Sigmoid colon (tissue), 7 donors: ENCODE measurements at regions of chr10 and their contacts with region 1.

Region 1: GRCh38 chr10:75111367-75111906 is at the start of gene SAMD8:
- DNase-seq: peak; percentile 99
- H3K4me3 ChIP-seq: peak within 1 kb of the TSS; percentile 69 to 97 (median 84)
- H3K27ac ChIP-seq: peak within 1 kb of the TSS; percentile 95 to 99 (median 97)
- H3K4me1 ChIP-seq: peaks cover 0 to 34% (median 21%) of the 10 kb centered on the region in 4 donors
- H3K27me3 ChIP-seq: no peaks in the 10 kb centered on the region
- CTCF ChIP-seq: peak in 2 of 4 experiments; percentile 25 to 39
- EP300 ChIP-seq: no peak
- POLR2A ChIP-seq: peak; percentile 84 to 94
- total RNA-seq, gene SAMD8: 25.0 to 37.5 (median 28.8) TPM

Region 2: GRCh38 chr10:75210282-75211006 is 99.0 kb after region 1 on chr10 and contains the start of gene VDAC2:
- intact Hi-C with region 1: loop called (anchors 5 kb)
- DNase-seq: peak; percentile 95
- H3K4me3 ChIP-seq: peak within 1 kb of the TSS; percentile 70 to 96 (median 76)
- H3K27ac ChIP-seq: peak within 1 kb of the TSS; percentile 99 to 100 (median 100)
- H3K4me1 ChIP-seq: peaks cover 0 to 64% (median 52%) of the 10 kb centered on the region in 4 donors
- H3K27me3 ChIP-seq: no peaks in the 10 kb centered on the region
- CTCF ChIP-seq: no peak
- EP300 ChIP-seq: no peak
- POLR2A ChIP-seq: peak; percentile 68 to 83
- total RNA-seq, gene VDAC2: 205 to 253 (median 232) TPM